Activated CD4-positive, alpha-beta memory T cell treated with anti-CD3 and anti-CD28 coated beads, Interleukin-2, amount 10 ng/mL, durations not matched to agents 7 days and 5 days (primary cell): ENCODE measurements at regions of chr18 and their contacts with region 1.

Region 1: DNA sequence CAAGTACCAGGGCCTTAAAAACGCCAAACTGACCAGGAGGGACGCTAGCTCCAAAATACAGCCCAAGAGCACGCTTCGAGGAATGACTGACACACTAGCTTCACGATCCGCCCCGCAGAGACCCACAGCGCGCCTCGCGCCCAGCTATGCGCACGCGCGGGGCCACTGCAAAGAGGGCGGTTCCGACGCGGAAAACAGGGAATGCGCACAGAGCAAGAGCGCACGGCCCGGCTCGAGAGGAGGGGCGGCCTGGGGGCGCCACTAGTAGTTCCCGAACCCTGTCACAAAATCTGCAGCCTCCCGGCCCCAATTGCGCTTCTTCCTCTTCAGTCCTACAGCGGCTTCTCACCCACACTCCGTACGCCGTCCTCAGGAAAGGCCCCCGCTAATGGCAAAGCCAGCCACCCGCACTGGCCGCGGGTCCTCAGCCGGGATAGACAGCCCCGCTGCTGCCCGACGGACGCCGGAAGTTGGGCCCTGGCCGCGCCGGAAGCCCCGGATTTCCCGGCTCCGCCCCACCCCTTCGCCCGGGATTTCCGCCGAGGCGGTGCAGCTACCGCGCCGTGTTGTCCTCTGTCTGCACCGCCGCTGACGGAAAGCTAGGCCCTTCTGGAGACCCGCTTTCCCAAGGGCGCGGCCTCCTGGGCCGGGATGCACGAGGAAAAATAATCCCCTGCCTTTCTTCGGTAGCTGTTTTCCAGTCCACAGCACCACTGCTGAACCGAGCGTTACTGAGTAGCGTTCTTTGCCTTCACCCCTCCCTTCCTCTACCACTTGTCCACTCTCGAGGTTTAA is at the start of gene HDHD2:
- DNase-seq: peak; percentile 78
- H3K4me3 Mint-ChIP-seq: peak within 1 kb of the TSS; percentile 92
- H3K27ac Mint-ChIP-seq: peak within 1 kb of the TSS; percentile 87
- H3K4me1 Mint-ChIP-seq: peaks cover 28% of the 10 kb centered on the region
- H3K27me3 Mint-ChIP-seq: no peaks in the 10 kb centered on the region
- total RNA-seq, gene HDHD2: 35.2 to 38.1 TPM

Region 2: DNA sequence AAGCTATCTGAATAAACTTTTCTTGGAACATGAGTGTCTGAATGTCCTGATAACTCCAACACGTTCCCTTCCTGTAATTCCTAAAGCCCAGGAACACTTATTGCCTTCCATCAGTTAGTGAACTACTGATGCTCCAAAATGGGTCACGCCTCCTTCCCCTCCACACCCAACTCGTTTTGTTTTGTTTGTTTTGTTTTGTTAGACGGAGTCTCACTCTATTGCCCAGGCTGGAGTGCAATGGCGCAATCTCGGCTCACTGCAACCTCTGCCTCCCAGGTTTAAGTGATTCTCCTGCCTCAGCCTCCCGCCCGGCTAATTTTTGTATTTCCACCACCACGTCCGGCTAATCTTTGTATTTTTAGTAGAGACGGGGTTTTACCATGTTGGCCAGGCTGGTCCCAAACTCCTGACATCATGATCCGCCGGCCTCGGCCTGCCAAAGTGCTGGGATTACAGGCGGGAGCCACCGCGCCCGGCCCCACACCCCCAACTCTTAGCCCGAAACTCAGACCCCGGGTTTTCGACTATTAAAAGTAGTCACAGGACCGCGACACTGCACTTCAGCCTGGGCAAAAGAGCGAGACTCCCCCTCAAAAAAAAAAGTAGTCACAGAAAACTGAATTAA is 25.2 kb after region 1 on chr18:
- CTCF ChIA-PET with region 1: interaction called, 5 read pairs
- POLR2A ChIA-PET with region 1: interaction called, 13 read pairs
- DNase-seq: no peak
- H3K4me3 Mint-ChIP-seq: no peak overlapping the region
- H3K27ac Mint-ChIP-seq: peak overlapping the region; percentile 58
- H3K4me1 Mint-ChIP-seq: peaks cover 2% of the 10 kb centered on the region
- H3K27me3 Mint-ChIP-seq: peaks cover 6% of the 10 kb centered on the region